Naive thymus-derived CD4-positive, alpha-beta T cell (primary cell): ENCODE measurements at regions of chr3 and their contacts with region 1.

Region 1: GRCh38 chr3:16600780-16601539 is 4.3 kb downstream of the DAZL start:
- DNase-seq: peak; percentile 54 to 79 (median 68)
- ATAC-seq: peak; percentile 68
- H3K4me3 ChIP-seq: no peak overlapping the region
- H3K4me3 Mint-ChIP-seq: no peak overlapping the region
- H3K27ac ChIP-seq: no peak overlapping the region
- H3K27ac Mint-ChIP-seq: no peak overlapping the region
- H3K4me1 ChIP-seq: peaks cover 0 to 3% of the 10 kb centered on the region in 2 donors
- H3K4me1 Mint-ChIP-seq: peaks cover 5 to 23% (median 16%) of the 10 kb centered on the region in 7 donors
- H3K27me3 ChIP-seq: no peaks in the 10 kb centered on the region
- H3K27me3 Mint-ChIP-seq: peaks cover 0 to 54% (median 4%) of the 10 kb centered on the region in 5 donors

Region 2: GRCh38 chr3:16828815-16829214 is 227.9 kb after region 1 on chr3:
- CTCF ChIA-PET with region 1: interaction called, 3 read pairs
- POLR2A ChIA-PET with region 1: no interaction called
- intact Hi-C with region 1: loop called (anchors 1 to 5 kb)
- DNase-seq: peak in 6 of 9 donors; percentile 29 to 59 (median 42)
- ATAC-seq: peak; percentile 80
- H3K4me3 ChIP-seq: no peak overlapping the region
- H3K4me3 Mint-ChIP-seq: no peak overlapping the region
- H3K27ac ChIP-seq: no peak overlapping the region
- H3K27ac Mint-ChIP-seq: peak overlapping the region in 3 of 9 donors; percentile 23 to 53 (median 42)
- H3K4me1 ChIP-seq: peaks cover 11 to 15% of the 10 kb centered on the region in 2 donors
- H3K4me1 Mint-ChIP-seq: peaks cover 16 to 37% (median 19%) of the 10 kb centered on the region in 7 donors
- H3K27me3 ChIP-seq: no peaks in the 10 kb centered on the region
- H3K27me3 Mint-ChIP-seq: peaks cover 0 to 20% (median 0%) of the 10 kb centered on the region in 5 donors

Region 3: GRCh38 chr3:17166369-17166768 is 565.4 kb after region 1 on chr3:
- CTCF ChIA-PET with region 1: no interaction called
- POLR2A ChIA-PET with region 1: no interaction called
- intact Hi-C with region 1: loop called in 1 of 2 experiments (anchors 1 kb)
- DNase-seq: peak in 4 of 9 donors; percentile 7 to 22 (median 14)
- ATAC-seq: no peak
- H3K4me3 ChIP-seq: no peak overlapping the region
- H3K4me3 Mint-ChIP-seq: no peak overlapping the region
- H3K27ac ChIP-seq: no peak overlapping the region
- H3K27ac Mint-ChIP-seq: peak overlapping the region in 2 of 9 donors; percentile 41 to 65
- H3K4me1 ChIP-seq: no peaks in the 10 kb centered on the region
- H3K4me1 Mint-ChIP-seq: peaks cover 0 to 15% (median 0%) of the 10 kb centered on the region in 7 donors
- H3K27me3 ChIP-seq: no peaks in the 10 kb centered on the region
- H3K27me3 Mint-ChIP-seq: no peaks in the 10 kb centered on the region

Region 4: DNA sequence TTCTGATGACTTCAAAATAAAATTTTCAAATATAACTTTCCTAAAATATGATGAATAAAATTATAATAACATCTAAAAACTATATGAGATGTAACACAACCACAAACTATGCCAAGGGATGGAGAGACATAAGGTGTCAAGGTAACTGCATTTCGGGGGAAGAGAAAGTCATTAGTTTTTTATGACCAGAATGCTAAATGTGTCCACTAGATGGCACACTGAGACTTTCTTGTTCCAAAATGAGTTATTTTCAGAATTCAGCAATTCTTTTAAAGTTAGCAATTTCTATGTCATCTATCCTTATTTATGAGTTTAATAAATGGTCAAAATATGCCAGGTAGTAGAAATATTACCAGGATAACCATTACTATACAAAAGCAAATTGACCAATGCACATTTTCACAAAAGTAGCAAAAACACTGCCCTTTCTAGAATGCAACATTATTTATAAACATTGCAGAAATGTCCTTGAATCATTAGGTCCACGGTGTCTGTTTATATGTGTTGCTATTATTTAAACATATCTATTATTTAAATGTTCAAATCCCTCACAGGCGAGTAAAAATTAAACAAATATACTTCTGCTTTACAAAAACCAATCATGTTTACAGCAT is 658.0 kb after region 1 on chr3:
- CTCF ChIA-PET with region 1: interaction called, 6 read pairs
- POLR2A ChIA-PET with region 1: no interaction called
- intact Hi-C with region 1: loop called (anchors 1 kb)
- DNase-seq: peak in 7 of 9 donors; percentile 7 to 53 (median 36)
- ATAC-seq: no peak
- H3K4me3 ChIP-seq: no peak overlapping the region
- H3K4me3 Mint-ChIP-seq: no peak overlapping the region
- H3K27ac ChIP-seq: no peak overlapping the region
- H3K27ac Mint-ChIP-seq: no peak overlapping the region
- H3K4me1 ChIP-seq: no peaks in the 10 kb centered on the region
- H3K4me1 Mint-ChIP-seq: peaks cover 0 to 2% (median 0%) of the 10 kb centered on the region in 7 donors
- H3K27me3 ChIP-seq: no peaks in the 10 kb centered on the region
- H3K27me3 Mint-ChIP-seq: no peaks in the 10 kb centered on the region

Region 5: GRCh38 chr3:17841190-17841828 is 1240.3 kb after region 1 on chr3:
- CTCF ChIA-PET with region 1: interaction called, 19 read pairs
- POLR2A ChIA-PET with region 1: no interaction called
- intact Hi-C with region 1: loop called (anchors 1 kb)
- DNase-seq: peak; percentile 35 to 73 (median 57)
- ATAC-seq: peak; percentile 89
- H3K4me3 ChIP-seq: no peak overlapping the region
- H3K4me3 Mint-ChIP-seq: no peak overlapping the region
- H3K27ac ChIP-seq: no peak overlapping the region
- H3K27ac Mint-ChIP-seq: no peak overlapping the region
- H3K4me1 ChIP-seq: no peaks in the 10 kb centered on the region
- H3K4me1 Mint-ChIP-seq: peaks cover 0 to 2% (median 0%) of the 10 kb centered on the region in 7 donors
- H3K27me3 ChIP-seq: no peaks in the 10 kb centered on the region
- H3K27me3 Mint-ChIP-seq: peaks cover 0 to 8% (median 6%) of the 10 kb centered on the region in 5 donors